ENCODE measurements at regions of chr5 and their contacts with region 1.

Region 1: DNA sequence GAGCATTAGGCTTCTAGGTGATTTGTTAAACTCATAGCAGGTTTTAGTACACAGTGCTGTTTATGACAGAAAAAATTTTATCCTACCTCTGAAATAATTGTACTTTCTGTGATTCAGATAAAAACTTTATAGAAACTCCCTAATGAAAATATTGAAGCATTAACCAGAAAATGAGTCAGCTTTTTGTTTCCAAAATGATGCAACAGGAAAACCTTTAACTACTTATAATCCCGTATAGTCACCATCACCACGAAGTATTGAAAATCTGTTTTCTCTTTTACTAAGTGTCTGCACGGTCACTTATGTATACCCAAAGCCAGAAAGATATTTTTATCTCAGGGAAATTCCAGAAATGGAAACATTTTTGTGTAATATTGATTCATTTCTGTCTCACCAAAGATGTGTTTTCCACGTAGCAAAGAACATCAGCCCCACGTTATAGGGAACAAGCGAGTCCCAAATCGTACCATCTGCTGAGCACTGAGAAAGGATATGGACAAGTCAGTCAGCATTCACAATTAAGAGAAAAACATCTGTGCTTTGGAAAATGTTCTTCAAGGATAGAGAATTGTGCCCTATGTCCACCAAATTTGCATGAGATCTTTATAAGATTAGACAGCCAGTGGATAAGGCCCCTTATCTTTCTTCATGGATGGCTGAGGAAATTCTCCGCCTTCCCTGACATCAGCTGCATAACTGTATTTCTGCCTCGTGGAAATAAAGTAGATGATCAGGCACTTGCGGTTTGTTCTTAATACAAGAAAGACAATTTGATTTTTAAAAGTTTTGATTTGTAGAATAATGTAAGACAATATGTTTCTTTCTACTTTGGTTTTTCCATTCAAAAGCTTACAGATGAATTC is 41.9 kb downstream of the TNFAIP8 start:
- DNase-seq: peak; percentile 55
- H3K4me3 Mint-ChIP-seq: peak overlapping the region; percentile 23
- H3K27ac Mint-ChIP-seq: peak overlapping the region; percentile 89
- H3K4me1 Mint-ChIP-seq: peaks cover 89% of the 10 kb centered on the region
- H3K27me3 Mint-ChIP-seq: no peaks in the 10 kb centered on the region

Region 2: GRCh38 chr5:119031905-119032304 is 365.8 kb before region 1 on chr5:
- CTCF ChIA-PET with region 1: no interaction called
- intact Hi-C with region 1: loop called (anchors 1 kb)
- DNase-seq: peak; percentile 42
- H3K4me3 Mint-ChIP-seq: no peak overlapping the region
- H3K27ac Mint-ChIP-seq: peak overlapping the region; percentile 89
- H3K4me1 Mint-ChIP-seq: peaks cover 46% of the 10 kb centered on the region
- H3K27me3 Mint-ChIP-seq: no peaks in the 10 kb centered on the region

Region 3: GRCh38 chr5:119079318-119079921 is 318.3 kb before region 1 on chr5:
- CTCF ChIA-PET with region 1: no interaction called
- intact Hi-C with region 1: loop called (anchors 1 kb)
- DNase-seq: peak; percentile 59
- H3K4me3 Mint-ChIP-seq: no peak overlapping the region
- H3K27ac Mint-ChIP-seq: peak overlapping the region; percentile 54
- H3K4me1 Mint-ChIP-seq: peaks cover 52% of the 10 kb centered on the region
- H3K27me3 Mint-ChIP-seq: no peaks in the 10 kb centered on the region

Region 4: GRCh38 chr5:119274767-119275130 is 123.0 kb before region 1 on chr5:
- CTCF ChIA-PET with region 1: no interaction called
- intact Hi-C with region 1: loop called (anchors 1 kb)
- DNase-seq: peak; percentile 50
- H3K4me3 Mint-ChIP-seq: peak overlapping the region; percentile 72
- H3K27ac Mint-ChIP-seq: peak overlapping the region; percentile 97
- H3K4me1 Mint-ChIP-seq: peaks cover 88% of the 10 kb centered on the region
- H3K27me3 Mint-ChIP-seq: no peaks in the 10 kb centered on the region

Region 5: GRCh38 chr5:119315516-119315949 is 82.2 kb before region 1 on chr5:
- CTCF ChIA-PET with region 1: interaction called, 7 read pairs
- intact Hi-C with region 1: loop called (anchors 1 kb)
- DNase-seq: peak; percentile 83
- H3K4me3 Mint-ChIP-seq: peak overlapping the region; percentile 36
- H3K27ac Mint-ChIP-seq: peak overlapping the region; percentile 96
- H3K4me1 Mint-ChIP-seq: peaks cover 94% of the 10 kb centered on the region
- H3K27me3 Mint-ChIP-seq: no peaks in the 10 kb centered on the region

Region 6: DNA sequence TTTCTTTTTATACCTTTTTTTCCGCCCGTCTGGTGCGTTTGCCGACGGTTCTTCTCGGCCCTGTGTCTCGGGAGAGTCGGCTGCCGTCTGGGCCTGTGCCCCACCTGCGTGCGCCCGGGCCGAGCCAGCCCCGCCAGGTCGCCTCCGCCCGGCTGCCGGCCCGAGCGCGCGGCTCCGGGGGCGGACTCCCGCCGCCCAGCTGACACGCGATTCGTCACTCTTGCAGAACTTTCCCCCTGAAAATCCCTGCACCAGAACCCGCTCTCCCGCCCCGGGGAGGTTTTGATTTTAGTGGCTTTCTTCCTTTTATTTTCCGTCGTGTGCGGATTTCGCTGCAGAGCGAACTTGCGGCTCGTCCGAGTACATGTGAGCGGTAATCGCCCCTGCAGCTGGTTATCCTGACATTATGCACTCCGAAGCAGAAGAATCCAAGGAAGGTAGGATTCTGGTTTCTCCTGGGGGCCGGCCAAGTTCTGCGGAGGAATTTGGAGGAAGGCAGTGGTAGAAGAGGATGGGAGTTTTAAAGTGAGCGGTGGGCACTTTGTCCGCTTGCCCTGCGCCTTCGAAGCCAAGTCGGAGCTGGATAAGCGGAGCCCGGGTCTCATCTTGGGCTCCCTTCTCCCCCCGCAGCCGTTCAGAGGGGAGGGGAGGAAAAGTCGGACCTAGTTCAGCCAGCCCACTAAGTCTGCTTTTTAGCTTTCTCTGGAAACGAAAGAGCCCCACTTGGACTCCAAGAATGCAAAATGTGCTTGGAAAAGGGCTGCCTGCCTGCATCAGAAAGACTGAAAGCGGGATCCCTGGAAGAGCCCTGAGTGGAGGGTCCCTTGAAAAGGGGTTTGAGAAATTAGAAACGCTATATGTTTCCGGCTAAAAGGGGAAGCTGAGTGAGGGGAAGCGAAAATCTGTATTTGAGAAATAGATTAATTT is 41.8 kb before region 1 on chr5 and contains the start of gene TNFAIP8:
- CTCF ChIA-PET with region 1: interaction called, 5 read pairs
- intact Hi-C with region 1: loop called (anchors 1 kb)
- DNase-seq: peak; percentile 91
- H3K4me3 Mint-ChIP-seq: peak within 1 kb of the TSS; percentile 98
- H3K27ac Mint-ChIP-seq: peak within 1 kb of the TSS; percentile 98
- H3K4me1 Mint-ChIP-seq: peaks cover 67% of the 10 kb centered on the region
- H3K27me3 Mint-ChIP-seq: no peaks in the 10 kb centered on the region
- total RNA-seq, gene TNFAIP8: 141 to 142 TPM

Measured in activated naive CD4-positive, alpha-beta T cell treated with anti-CD3 and anti-CD28 coated beads for 36 hours (primary cell).